ENCODE measurements at regions of chr11 and their contacts with region 1.

Region 1: GRCh38 chr11:30314625-30315024 is 8.3 kb upstream of the ARL14EP start:
- DNase-seq: no peak
- ATAC-seq: no peak

Region 2: GRCh38 chr11:30120045-30120589 is 194.5 kb before region 1 on chr11:
- intact Hi-C with region 1: no loop called
- DNase-seq: no peak
- ATAC-seq: no peak

Region 3: DNA sequence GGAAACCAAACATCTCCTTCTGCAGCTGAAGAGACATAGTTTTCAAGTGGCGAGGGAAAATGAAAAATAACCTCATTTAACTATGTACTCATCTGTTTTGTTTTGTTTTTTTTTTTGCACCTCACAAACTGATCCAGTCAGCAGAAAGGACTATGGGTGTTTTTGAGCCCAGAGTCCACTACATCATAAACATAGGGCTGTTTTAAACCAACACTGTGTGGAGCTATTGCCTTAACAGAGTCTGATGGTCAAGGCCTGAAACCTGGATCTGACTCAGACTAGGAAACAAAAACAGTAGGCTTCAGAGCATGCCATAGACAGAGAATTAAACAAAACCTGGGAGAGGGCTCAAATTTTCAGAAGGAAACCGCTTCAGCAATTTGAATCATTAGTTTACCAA is 183.1 kb before region 1 on chr11:
- intact Hi-C with region 1: loop called (anchors 10 kb)
- DNase-seq: no peak
- ATAC-seq: peak; percentile 54

Region 4: DNA sequence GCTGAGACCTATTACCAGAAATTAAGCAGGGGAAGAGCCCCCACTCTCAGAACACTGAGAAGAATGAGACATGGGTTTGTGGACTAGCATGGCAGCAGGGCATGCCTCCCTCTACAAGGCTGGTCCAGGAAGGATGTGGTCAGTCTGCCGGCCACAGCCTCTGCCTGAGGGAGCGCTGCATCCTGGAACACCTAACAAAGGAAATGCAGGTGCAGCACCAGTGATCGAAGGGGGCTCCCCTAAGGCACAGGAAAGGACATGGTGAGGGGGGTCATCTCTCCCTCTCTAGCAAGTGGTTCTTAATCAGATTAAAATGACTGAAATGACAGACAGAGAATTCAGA is 32.4 kb before region 1 on chr11:
- intact Hi-C with region 1: no loop called
- DNase-seq: no peak
- ATAC-seq: no peak

Region 5: GRCh38 chr11:30377347-30377746 is 62.7 kb after region 1 on chr11:
- intact Hi-C with region 1: no loop called
- DNase-seq: no peak
- ATAC-seq: no peak

Region 6: DNA sequence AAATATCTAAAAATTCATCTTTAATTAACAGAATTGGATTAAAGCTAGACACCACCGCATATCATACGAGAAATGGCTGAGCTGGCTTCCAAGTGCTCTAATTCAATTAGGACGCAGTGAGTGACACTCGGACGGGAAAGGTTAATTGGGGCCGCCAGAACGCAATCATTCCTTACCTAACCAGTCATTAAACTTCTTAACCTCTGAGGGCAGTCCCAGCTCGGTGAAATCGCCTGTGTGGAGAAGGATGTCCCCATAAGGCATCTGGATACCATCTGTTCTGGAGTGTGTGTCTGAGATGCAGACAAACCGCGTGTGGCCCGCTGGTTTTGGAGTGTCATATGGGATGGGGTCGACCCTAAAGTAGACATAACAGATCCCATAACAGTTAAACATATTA is 221.2 kb after region 1 on chr11:
- intact Hi-C with region 1: no loop called
- DNase-seq: no peak
- ATAC-seq: no peak